Endothelial cell of umbilical vein (primary cell): ENCODE measurements at regions of chr10 and their contacts with region 1.

Region 1: GRCh38 chr10:34522546-34522945 is 292.6 kb downstream of the PARD3 start:
- DNase-seq: peak; percentile 53
- H3K4me3 ChIP-seq: no peak overlapping the region
- H3K27ac ChIP-seq: no peak overlapping the region
- H3K4me1 ChIP-seq: peaks cover 22% of the 10 kb centered on the region
- H3K27me3 ChIP-seq: no peaks in the 10 kb centered on the region
- CTCF ChIP-seq: peak; percentile 35 to 51
- POLR2A ChIP-seq: no peak

Region 2: GRCh38 chr10:33509231-33509831 is 1013.2 kb before region 1 on chr10:
- CTCF ChIA-PET with region 1: no interaction called
- POLR2A ChIA-PET with region 1: no interaction called
- dilution Hi-C with region 1: no loop called
- intact Hi-C with region 1: loop called (anchors 10 kb)
- DNase-seq: peak; percentile 95
- H3K4me3 ChIP-seq: no peak overlapping the region
- H3K27ac ChIP-seq: peak overlapping the region; percentile 68
- H3K4me1 ChIP-seq: peaks cover 14% of the 10 kb centered on the region
- H3K27me3 ChIP-seq: no peaks in the 10 kb centered on the region
- CTCF ChIP-seq: no peak
- POLR2A ChIP-seq: no peak

Region 3: GRCh38 chr10:34407324-34407805 is 115.2 kb before region 1 on chr10:
- CTCF ChIA-PET with region 1: no interaction called
- POLR2A ChIA-PET with region 1: no interaction called
- dilution Hi-C with region 1: no loop called
- intact Hi-C with region 1: loop called (anchors 2 kb)
- DNase-seq: peak; percentile 70
- H3K4me3 ChIP-seq: no peak overlapping the region
- H3K27ac ChIP-seq: no peak overlapping the region
- H3K4me1 ChIP-seq: peaks cover 24% of the 10 kb centered on the region
- H3K27me3 ChIP-seq: no peaks in the 10 kb centered on the region
- CTCF ChIP-seq: no peak
- POLR2A ChIP-seq: no peak